Sigmoid colon (tissue), 7 donors: ENCODE measurements at regions of chr5 and their contacts with region 1.

Region 1: DNA sequence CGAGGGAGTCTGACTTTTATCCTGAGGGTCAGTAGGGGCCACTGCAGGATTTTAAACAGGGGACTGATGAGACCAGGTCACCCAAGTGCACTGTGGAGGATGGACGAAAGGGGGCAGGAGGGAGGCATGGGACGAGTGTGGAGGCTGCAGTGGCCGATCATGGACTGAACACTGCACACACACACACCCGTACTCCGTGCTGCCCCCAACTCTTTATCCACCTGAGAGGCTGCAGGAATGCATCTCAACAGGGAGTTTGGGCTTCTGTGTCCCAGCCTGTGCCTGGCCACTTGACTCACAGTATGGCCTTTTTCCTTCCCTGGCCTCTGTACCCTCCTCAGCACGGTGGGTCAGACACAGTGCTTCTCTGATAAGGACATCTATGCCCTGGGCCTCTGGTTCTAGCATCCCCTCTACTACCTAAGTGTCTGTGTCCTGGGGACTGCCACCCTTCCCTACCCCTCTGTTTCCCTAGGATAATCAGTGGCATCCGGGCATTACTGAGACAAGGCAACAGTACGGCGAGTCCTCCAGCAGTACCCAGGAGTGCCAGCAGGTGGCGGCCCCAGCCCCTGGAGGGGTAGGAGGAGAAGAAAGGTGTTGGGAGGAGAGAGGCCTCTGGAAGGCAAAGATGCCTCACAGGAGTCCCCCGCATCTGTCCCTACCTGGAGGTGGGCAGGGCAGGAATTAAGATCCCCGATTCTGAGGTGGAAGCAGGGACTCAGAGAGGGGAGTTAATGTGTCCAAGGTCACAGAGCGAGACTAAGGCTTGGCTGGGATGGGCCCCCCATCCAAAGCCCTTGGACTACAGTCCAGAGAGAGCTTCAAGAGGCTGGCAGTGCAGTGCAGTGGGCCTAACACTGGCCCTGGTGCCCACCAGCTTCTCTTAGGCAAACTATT is 5.1 kb upstream of the CDX1 start:
- DNase-seq: peak; percentile 89
- H3K4me3 ChIP-seq: no peak overlapping the region
- H3K27ac ChIP-seq: peak overlapping the region in 3 of 4 donors; percentile 85 to 92 (median 89)
- H3K4me1 ChIP-seq: peaks cover 0 to 19% (median 3%) of the 10 kb centered on the region in 4 donors
- H3K27me3 ChIP-seq: peaks cover 0 to 4% (median under 1%) of the 10 kb centered on the region in 3 donors
- CTCF ChIP-seq: peak; percentile 71 to 95 (median 92)
- EP300 ChIP-seq: no peak
- POLR2A ChIP-seq: no peak

Region 2: GRCh38 chr5:150357326-150358260 is 196.1 kb after region 1 on chr5 and contains the start of gene TCOF1:
- intact Hi-C with region 1: loop called (anchors 10 kb)
- DNase-seq: peak; percentile 98
- H3K4me3 ChIP-seq: peak within 1 kb of the TSS; percentile 72 to 94 (median 90)
- H3K27ac ChIP-seq: peak within 1 kb of the TSS; percentile 39 to 73 (median 71)
- H3K4me1 ChIP-seq: peaks cover 0 to 26% (median 17%) of the 10 kb centered on the region in 4 donors
- H3K27me3 ChIP-seq: no peaks in the 10 kb centered on the region
- CTCF ChIP-seq: no peak
- EP300 ChIP-seq: no peak
- POLR2A ChIP-seq: no peak
- total RNA-seq, gene TCOF1: 17.4 to 28.1 (median 23.6) TPM